Activated naive CD4-positive, alpha-beta T cell treated with anti-CD3 and anti-CD28 coated beads for 36 hours (primary cell): ENCODE measurements at regions of chr3 and their contacts with region 1.

Region 1: DNA sequence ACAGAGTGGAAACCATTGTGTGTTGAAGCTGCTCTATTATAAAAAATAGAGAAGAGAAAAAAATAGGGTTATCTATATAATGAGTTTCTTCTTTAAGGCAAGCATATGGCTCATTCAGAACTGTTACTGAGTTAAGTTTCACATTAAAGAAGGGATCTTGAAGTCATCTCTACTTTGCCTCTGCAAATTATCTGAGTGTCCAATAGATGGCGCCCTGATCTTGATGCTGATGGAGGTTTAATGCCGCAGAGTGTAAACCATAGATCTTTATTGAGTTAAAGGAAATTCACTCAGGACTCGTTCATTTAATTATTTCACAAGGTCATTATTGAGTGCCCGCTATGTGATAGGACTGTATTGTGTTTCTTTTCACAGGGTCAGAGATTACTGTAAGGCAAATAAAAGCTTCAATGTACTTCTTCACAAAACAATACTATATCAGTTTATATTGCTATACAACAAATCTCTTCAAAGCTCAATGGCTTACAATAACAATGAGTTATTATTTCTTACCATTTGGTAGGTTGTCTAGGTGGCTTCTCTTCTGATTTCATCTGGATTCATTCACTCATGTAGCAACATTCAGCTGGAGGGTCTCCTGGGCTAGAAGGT is 171.4 kb downstream of the NSUN3 start:
- DNase-seq: peak; percentile 7
- H3K4me3 Mint-ChIP-seq: no peak overlapping the region
- H3K27ac Mint-ChIP-seq: no peak overlapping the region
- H3K4me1 Mint-ChIP-seq: no peaks in the 10 kb centered on the region
- H3K27me3 Mint-ChIP-seq: peaks cover 2% of the 10 kb centered on the region

Region 2: GRCh38 chr3:94249585-94249984 is 15.3 kb after region 1 on chr3:
- CTCF ChIA-PET with region 1: interaction called, 12 read pairs
- intact Hi-C with region 1: no loop called
- DNase-seq: peak; percentile 82
- H3K4me3 Mint-ChIP-seq: no peak overlapping the region
- H3K27ac Mint-ChIP-seq: no peak overlapping the region
- H3K4me1 Mint-ChIP-seq: no peaks in the 10 kb centered on the region
- H3K27me3 Mint-ChIP-seq: peaks cover 19% of the 10 kb centered on the region